ENCODE measurements at regions of chr20 and their contacts with region 1.

Region 1: DNA sequence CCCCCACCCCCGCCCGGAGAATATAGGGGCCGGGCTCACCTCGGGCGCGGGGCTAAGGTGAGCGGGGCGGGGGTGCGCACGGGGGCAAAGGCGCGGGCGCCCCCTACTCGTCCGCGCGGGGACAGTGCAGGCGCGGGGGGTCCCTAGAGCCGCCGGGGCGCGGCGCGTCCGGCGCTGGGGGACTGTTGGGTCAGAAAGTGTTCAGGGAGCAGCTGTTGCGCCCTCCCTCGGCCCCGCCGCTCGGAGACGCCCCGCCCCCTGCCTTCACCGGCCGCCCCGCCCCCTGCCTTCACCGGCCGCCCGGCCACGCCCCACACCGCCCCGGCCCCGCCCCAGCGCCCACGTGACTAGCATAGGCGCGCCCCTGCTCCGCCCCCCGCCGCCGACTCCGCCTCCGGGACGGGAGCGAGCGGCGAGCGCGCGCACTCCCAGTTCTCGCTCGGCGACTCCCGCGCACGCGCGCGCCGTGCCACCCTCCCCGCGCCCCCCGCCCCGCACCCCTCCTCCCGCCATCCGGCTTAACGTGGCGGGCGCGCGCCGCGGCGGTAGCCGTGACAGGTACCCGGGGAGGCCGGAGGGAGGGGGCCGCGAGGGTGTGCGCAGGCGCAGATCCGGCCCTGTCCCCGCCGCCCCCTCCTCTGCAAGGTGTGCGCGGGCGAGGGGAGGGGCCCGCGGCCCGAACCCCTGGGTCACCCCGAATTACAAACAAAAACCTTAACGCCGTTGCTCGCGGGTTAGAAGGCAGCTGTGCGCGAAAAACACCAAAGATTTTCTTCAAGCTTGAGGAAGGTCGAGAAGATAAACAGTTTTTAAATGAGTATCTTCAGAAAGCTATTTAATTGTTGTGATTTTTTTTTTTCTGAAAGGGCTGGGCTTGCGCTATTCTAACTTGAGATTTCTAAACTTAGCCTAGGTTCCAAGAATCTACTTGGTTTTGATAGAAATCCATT is 704 bp upstream of the ZNF217 start:
- DNase-seq: peak; percentile 96
- ATAC-seq: peak; percentile 79
- H3K4me3 Mint-ChIP-seq: peak overlapping the region; percentile 82
- H3K27ac Mint-ChIP-seq: peak overlapping the region; percentile 96
- H3K4me1 Mint-ChIP-seq: peaks cover 40% of the 10 kb centered on the region
- H3K27me3 Mint-ChIP-seq: no peaks in the 10 kb centered on the region

Region 2: GRCh38 chr20:53578492-53579222 is 15.7 kb before region 1 on chr20:
- CTCF ChIA-PET with region 1: interaction called, 16 read pairs
- DNase-seq: peak; percentile 72
- ATAC-seq: peak; percentile 34
- H3K4me3 Mint-ChIP-seq: peak overlapping the region; percentile 89
- H3K27ac Mint-ChIP-seq: peak overlapping the region; percentile 88
- H3K4me1 Mint-ChIP-seq: peaks cover 78% of the 10 kb centered on the region
- H3K27me3 Mint-ChIP-seq: no peaks in the 10 kb centered on the region

Region 3: GRCh38 chr20:53611449-53611894 is 17.1 kb after region 1 on chr20:
- CTCF ChIA-PET with region 1: interaction called, 12 read pairs
- DNase-seq: peak; percentile 36
- ATAC-seq: no peak
- H3K4me3 Mint-ChIP-seq: no peak overlapping the region
- H3K27ac Mint-ChIP-seq: no peak overlapping the region
- H3K4me1 Mint-ChIP-seq: peaks cover 28% of the 10 kb centered on the region
- H3K27me3 Mint-ChIP-seq: no peaks in the 10 kb centered on the region

Region 4: GRCh38 chr20:53668992-53669391 is 74.6 kb after region 1 on chr20:
- CTCF ChIA-PET with region 1: no interaction called
- DNase-seq: no peak
- ATAC-seq: no peak
- H3K4me3 Mint-ChIP-seq: no peak overlapping the region
- H3K27ac Mint-ChIP-seq: no peak overlapping the region
- H3K4me1 Mint-ChIP-seq: no peaks in the 10 kb centered on the region
- H3K27me3 Mint-ChIP-seq: no peaks in the 10 kb centered on the region